BJ (cell line): ENCODE measurements at regions of chr13 and their contacts with region 1.

Region 1: DNA sequence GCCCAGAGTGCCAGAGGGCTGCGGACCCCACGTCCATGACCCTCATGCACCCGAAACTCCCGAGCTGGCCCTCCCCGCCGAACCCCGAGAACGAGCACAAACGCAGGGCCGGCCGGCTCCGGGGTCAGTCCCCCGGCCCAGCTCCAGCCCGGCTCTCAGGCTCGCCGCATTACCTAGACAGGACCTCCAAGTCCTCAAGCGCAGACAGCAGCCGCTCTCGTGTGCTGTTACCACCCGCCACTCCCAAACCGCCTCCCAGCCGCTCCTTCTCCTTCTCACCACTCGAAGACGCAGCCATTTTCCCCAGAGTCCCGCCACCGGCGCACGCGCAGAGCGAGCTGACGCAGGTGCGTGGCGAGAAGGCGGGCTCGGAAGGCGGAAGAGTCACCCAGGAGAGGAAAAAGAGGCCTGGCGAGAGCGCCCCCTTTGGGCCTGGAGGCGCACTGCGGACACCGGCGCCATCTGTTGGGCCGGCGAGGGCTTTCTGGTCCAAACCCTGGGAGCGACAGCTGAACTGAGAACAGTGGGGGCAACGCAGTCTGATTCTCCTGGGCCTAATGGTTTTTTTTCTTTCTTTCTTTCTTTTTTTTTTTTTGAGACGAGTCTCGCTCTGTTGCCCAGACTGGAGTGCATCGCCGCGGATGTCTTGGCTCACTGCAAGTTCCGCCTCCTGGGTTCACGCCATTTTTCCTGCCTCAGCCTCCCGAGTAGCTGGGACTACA is at the start of gene MED4:
- DNase-seq: peak; percentile 49
- H3K4me3 ChIP-seq: peak within 1 kb of the TSS; percentile 99
- H3K27me3 ChIP-seq: 0 out of 2 replicates have a peak, but pooled peaks cover 2% of the 10 kb centered on the region
- CTCF ChIP-seq: peak; percentile 100
- polyA plus RNA-seq, gene MED4: 30.1 and 41.3 TPM in 2 replicates

Region 2: GRCh38 chr13:48081739-48082138 is 13.2 kb before region 1 on chr13:
- CTCF ChIA-PET with region 1: interaction called, 20 read pairs
- POLR2A ChIA-PET with region 1: no interaction called
- DNase-seq: no peak
- H3K4me3 ChIP-seq: no peak overlapping the region
- H3K27me3 ChIP-seq: no peaks in the 10 kb centered on the region
- CTCF ChIP-seq: no peak